ENCODE measurements at regions of chr1 and their contacts with region 1.

Region 1: DNA sequence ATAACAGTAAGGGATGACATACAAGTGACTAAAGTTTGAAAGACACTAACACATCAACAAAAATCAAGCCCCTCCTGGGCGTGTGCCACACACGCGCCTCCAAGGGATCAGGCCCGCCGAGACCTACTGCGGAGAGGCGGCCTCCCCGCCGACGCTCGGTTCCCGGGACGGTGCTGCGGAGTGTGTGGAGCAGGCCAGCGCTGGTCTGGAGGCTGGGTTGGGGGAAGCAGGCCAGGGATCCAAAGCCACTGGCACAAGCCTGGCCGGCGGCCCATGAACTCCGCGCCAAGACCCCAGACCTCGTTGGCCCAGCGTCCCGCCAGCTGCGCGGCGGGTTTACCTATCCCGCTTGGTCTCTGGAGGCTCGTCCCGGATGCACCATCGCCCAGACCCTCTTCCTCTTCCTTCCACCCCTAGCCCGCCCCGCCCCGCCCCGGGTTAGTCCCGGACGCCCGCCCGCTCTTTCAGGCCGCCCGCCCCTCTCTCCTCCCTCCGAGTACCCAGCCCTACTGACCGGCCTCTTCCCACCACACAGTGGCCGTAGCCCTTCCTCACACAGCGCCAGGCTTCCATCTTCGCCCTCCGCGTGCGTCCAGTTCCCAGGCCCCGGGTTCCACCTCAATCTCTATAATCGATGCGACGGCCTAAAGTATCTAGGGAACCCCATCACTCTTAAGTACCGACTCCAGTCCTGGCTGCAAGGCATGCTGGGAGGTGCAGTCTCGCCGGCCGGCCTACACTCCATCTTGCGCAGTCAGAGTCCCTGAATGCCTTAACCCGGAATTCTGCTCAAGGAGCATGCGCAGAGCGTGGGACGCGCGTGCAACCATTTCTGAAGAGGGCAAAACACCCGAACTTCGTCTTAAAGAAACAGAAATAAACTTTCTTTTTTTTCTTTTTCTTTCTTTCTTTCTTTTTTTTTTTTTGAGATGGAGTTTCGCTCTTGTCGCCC is at the start of gene ANGEL2:
- DNase-seq: peak; percentile 94 to 99 (median 98)

Region 2: GRCh38 chr1:213051127-213051880 is 35.9 kb after region 1 on chr1 and contains the start of gene RPS6KC1:
- intact Hi-C with region 1: loop called (anchors 2 kb)
- DNase-seq: peak; percentile 80 to 96 (median 91)

Region 3: GRCh38 chr1:213094446-213094845 is 79.1 kb after region 1 on chr1:
- intact Hi-C with region 1: no loop called
- DNase-seq: peak in 1 of 42 donors; percentile 24